Transverse colon (tissue), 4 donors: ENCODE measurements at regions of chr5 and their contacts with region 1.

Region 1: GRCh38 chr5:138807182-138807581 is 54.0 kb downstream of the CTNNA1 start:
- DNase-seq: no peak
- H3K4me3 ChIP-seq: no peak overlapping the region
- H3K27ac ChIP-seq: no peak overlapping the region
- H3K4me1 ChIP-seq: peaks cover 0 to 12% (median 2%) of the 10 kb centered on the region in 4 donors
- H3K27me3 ChIP-seq: no peaks in the 10 kb centered on the region
- CTCF ChIP-seq: no peak
- EP300 ChIP-seq: no peak
- POLR2A ChIP-seq: no peak

Region 2: DNA sequence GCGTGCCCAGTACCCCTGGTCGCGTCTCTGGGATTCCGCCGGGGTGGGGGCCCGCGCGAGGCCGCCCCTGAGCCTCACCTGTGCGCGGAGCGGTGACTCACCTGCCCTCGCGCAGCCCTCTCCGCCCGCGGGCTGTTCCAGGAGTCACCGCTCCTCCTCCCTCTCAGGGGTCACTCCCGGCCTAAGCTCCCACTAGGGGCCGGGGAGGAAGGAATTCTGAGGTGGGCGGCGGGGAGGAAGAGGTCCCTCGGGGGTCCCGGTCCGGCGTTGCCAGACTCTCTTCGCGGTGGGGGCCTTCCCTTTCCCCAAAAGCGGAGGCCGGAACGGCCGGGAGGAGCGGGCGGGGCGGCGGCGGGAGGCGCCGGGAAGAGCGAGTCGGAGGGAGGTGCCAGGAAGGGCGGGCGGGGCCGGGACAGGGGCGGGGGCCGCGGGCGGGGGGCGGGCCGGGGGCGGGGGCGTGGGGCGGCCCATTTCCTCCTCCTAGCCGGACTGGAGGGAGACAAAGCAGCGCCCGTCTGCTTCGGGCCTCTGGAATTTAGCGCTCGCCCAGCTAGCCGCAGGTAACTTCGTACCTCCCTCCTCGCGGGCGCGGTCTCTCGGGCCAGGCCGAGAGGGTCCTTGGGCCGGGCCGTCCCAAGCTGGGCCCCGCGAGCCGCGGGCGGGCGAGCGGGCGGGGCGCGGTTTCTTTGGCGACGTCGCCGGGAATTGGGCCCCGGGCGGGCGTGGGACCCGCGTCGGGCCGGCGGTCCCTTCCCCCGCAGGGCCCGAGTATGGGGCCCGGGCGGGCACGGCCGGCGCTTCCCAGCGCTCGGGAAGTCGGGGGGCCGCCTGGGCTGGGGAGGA is 54.0 kb before region 1 on chr5 and contains the start of gene CTNNA1:
- in situ Hi-C with region 1: no loop called
- intact Hi-C with region 1: no loop called
- DNase-seq: peak; percentile 86
- H3K4me3 ChIP-seq: peak within 1 kb of the TSS; percentile 68 to 99 (median 96)
- H3K27ac ChIP-seq: peak within 1 kb of the TSS; percentile 99 to 100 (median 100)
- H3K4me1 ChIP-seq: peaks cover 0 to 41% (median 32%) of the 10 kb centered on the region in 4 donors
- H3K27me3 ChIP-seq: no peaks in the 10 kb centered on the region
- CTCF ChIP-seq: peak in 2 of 5 experiments; percentile 34
- EP300 ChIP-seq: no peak
- POLR2A ChIP-seq: peak; percentile 59
- total RNA-seq, gene CTNNA1: 272 to 381 (median 316) TPM

Region 3: GRCh38 chr5:138819081-138819480 is 11.9 kb after region 1 on chr5:
- in situ Hi-C with region 1: no loop called
- intact Hi-C with region 1: loop called (anchors 1 kb)
- DNase-seq: no peak
- H3K4me3 ChIP-seq: no peak overlapping the region
- H3K27ac ChIP-seq: no peak overlapping the region
- H3K4me1 ChIP-seq: peaks cover 0 to 3% (median 0%) of the 10 kb centered on the region in 4 donors
- H3K27me3 ChIP-seq: no peaks in the 10 kb centered on the region
- CTCF ChIP-seq: no peak
- EP300 ChIP-seq: no peak
- POLR2A ChIP-seq: no peak

Region 4: GRCh38 chr5:138890644-138891043 is 83.5 kb after region 1 on chr5:
- in situ Hi-C with region 1: no loop called
- intact Hi-C with region 1: no loop called
- DNase-seq: no peak
- H3K4me3 ChIP-seq: no peak overlapping the region
- H3K27ac ChIP-seq: no peak overlapping the region
- H3K4me1 ChIP-seq: no peaks in the 10 kb centered on the region
- H3K27me3 ChIP-seq: no peaks in the 10 kb centered on the region
- CTCF ChIP-seq: no peak
- EP300 ChIP-seq: no peak
- POLR2A ChIP-seq: no peak